ENCODE measurements at regions of chr6 and their contacts with region 1.

Region 1: DNA sequence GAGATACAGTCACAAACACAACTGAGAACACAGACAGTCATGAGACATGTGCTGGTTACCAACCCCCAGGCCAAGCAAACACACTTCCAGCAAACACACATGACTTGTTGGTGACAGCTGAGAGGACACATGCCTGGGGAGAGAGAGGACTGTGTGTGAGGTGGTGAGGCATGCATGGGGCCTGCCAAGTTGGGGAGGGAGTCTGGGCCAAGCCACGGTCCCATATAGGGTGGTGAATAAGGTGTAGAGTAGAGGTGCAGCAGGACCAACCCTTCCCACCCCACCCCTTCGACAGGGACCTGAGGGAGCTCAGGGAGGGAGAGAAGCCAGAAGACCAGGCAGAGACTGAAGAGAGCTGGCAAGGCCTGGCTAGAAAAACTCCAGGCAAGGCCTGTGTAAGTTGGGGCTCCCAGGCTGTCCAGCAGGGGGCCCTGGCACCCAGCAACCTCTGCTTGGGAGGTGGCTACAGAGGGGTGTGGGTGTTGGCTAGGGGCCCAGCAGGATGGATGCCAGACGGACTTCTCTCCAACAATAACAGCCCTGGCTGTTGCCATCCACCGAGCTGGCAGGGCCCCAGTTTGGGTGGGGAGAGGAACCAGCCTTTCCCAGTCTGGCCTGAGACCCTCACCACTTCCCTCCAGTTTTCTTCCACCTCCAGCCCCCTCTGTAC is 2.0 kb upstream of the SLC29A1 start:
- DNase-seq: peak; percentile 70
- ATAC-seq: peak; percentile 5
- H3K4me3 Mint-ChIP-seq: no peak overlapping the region; the same call in none of the 2 replicates
- H3K27ac Mint-ChIP-seq: peak overlapping the region; percentile 95
- H3K4me1 Mint-ChIP-seq: peaks cover 69% of the 10 kb centered on the region
- H3K27me3 Mint-ChIP-seq: no peaks in the 10 kb centered on the region
- CTCF ChIP-seq: peak; percentile 45; the same call in 1 of the 2 replicates

Region 2: GRCh38 chr6:44185953-44186634 is 35.3 kb before region 1 on chr6:
- CTCF ChIA-PET with region 1: interaction called, 13 read pairs
- POLR2A ChIA-PET with region 1: interaction called, 6 read pairs
- DNase-seq: no peak
- ATAC-seq: peak; percentile 63
- H3K4me3 Mint-ChIP-seq: no peak overlapping the region
- H3K27ac Mint-ChIP-seq: peak overlapping the region; percentile 22
- H3K4me1 Mint-ChIP-seq: peaks cover 33% of the 10 kb centered on the region
- H3K27me3 Mint-ChIP-seq: peaks cover 8% of the 10 kb centered on the region
- CTCF ChIP-seq: no peak

Region 3: DNA sequence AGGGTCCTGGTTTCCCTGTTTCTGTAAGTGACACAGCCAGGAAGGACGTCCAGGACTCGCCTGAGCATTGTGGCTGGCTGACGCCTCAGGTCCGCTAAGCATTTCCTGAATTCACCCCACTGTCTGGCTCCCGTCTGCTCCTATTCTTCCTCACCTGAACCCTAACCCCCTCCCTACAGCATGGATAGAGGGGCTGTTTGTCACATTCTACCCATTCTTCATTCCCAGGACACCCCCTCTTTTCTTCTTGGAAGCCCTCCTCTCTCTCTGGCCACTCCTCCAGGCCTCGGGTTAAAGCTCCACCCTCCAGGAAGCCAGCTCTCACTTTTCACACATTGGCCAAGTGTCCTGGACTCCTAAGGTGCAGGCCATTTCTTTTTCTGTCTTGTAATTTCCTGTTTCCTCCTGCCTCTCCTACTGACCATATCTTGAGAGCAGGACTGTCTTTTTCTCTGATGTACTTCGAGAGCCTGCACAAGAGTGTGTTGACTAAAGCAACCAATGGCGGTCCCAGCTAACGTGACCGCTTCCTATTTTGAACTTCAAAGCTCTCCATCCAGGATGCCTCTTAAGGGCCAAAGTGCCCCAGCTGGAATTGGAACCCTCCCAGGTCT is 28.9 kb before region 1 on chr6:
- CTCF ChIA-PET with region 1: interaction called, 7 read pairs
- POLR2A ChIA-PET with region 1: interaction called, 11 read pairs
- DNase-seq: no peak
- ATAC-seq: peak; percentile 93
- H3K4me3 Mint-ChIP-seq: peak overlapping the region; percentile 32
- H3K27ac Mint-ChIP-seq: peak overlapping the region; percentile 68
- H3K4me1 Mint-ChIP-seq: peaks cover 17% of the 10 kb centered on the region
- H3K27me3 Mint-ChIP-seq: no peaks in the 10 kb centered on the region
- CTCF ChIP-seq: no peak

Region 4: DNA sequence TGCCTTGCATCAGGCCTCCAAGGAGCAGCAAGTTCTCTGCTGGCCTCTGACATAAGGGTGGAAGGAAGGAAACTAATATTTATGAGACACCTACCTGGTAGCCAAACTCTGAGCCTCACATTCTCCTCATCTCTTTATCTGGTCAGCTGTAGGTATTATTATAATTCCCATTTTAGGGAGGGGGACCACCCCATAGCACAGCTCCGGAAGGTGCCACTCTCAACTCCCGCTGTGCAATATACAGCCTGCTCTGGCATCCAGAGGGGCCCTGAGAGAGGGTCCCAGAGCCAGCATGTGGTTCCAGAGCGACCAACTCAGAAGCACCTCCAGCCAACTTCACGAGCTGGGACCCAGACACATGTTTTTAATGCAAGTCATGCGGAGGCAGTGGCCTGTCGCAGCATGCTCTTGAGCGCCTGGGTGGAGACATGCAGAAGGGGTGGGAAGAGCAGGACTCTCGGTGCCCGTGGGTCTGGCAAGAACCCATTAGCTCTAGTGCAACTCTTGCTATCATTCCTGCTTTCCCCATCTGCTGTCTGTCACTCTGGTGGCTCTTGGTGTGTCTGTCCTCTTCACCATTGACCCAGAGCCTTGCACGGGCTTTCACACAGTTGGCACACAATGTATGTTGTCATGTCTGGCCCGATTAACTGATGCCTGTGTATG is 19.7 kb before region 1 on chr6:
- CTCF ChIA-PET with region 1: interaction called, 14 read pairs
- POLR2A ChIA-PET with region 1: interaction called, 21 read pairs
- DNase-seq: no peak
- ATAC-seq: no peak
- H3K4me3 Mint-ChIP-seq: no peak overlapping the region
- H3K27ac Mint-ChIP-seq: peak overlapping the region; percentile 100
- H3K4me1 Mint-ChIP-seq: peaks cover 53% of the 10 kb centered on the region
- H3K27me3 Mint-ChIP-seq: no peaks in the 10 kb centered on the region; the same call in 1 of the 2 replicates
- CTCF ChIP-seq: no peak

Region 5: DNA sequence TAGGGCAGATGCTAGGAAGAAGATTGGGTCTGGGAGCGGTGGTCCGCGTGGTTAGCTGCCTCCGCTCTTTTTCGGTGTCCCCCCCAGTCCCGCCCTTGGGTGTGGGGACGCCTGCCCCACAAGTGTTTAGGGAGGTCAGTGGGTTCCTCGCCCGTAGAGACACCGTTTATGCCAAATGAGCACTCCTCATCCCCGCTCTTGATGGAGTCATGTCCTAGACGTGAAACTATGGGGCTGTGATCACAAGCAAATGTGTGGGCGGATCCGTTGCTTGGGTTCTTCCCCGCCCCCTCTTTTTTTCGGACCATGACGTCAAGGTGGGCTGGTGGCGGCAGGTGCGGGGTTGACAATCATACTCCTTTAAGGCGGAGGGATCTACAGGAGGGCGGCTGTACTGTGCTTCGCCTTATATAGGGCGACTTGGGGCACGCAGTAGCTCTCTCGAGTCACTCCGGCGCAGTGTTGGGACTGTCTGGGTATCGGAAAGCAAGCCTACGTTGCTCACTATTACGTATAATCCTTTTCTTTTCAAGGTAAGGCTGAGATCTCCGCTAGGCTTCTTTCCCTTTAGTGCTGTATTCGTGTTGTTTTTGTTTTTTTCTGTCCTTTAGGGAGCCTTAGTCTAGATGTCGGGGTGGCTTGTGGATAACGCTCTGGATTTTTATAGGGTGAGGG is 25.4 kb after region 1 on chr6 and contains the start of gene HSP90AB1:
- CTCF ChIA-PET with region 1: interaction called, 33 read pairs
- POLR2A ChIA-PET with region 1: interaction called, 63 read pairs
- DNase-seq: peak; percentile 93
- ATAC-seq: peak; percentile 59
- H3K4me3 Mint-ChIP-seq: peak within 1 kb of the TSS; percentile 99
- H3K27ac Mint-ChIP-seq: peak within 1 kb of the TSS; percentile 99
- H3K4me1 Mint-ChIP-seq: peaks cover 37% of the 10 kb centered on the region
- H3K27me3 Mint-ChIP-seq: peaks cover 10% of the 10 kb centered on the region
- CTCF ChIP-seq: no peak
- total RNA-seq, gene HSP90AB1: 2,159 to 2,172 TPM (median 2,171 TPM) in 3 replicates

Region 6: DNA sequence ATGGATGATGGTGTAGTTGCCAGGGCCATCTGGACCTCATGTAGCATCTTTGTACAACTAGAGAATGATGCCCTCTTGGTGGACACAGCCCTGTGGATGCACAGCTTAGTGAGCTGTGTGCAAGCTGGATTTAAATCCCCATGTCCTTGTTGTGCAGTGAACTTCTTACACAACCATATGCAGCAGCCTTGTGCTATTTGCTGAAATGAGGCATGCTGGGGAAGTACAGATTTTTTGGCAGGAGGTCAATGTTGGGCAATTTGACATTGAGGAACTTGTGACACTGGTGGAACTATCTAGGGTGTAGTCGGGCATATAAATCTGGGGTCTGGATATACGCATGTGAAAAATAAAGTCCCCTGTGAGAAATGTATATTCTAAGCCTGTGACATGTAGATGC is 160.3 kb after region 1 on chr6:
- CTCF ChIA-PET with region 1: no interaction called
- POLR2A ChIA-PET with region 1: no interaction called
- DNase-seq: no peak
- ATAC-seq: no peak
- H3K4me3 Mint-ChIP-seq: no peak overlapping the region
- H3K27ac Mint-ChIP-seq: no peak overlapping the region
- H3K4me1 Mint-ChIP-seq: peaks cover 4% of the 10 kb centered on the region; the same call in 1 of the 2 replicates
- H3K27me3 Mint-ChIP-seq: no peaks in the 10 kb centered on the region
- CTCF ChIP-seq: no peak

Measured in WTC11 (cell line).